SK-N-SH (cell line): ENCODE measurements at regions of chr6 and their contacts with region 1.

Region 1: GRCh38 chr6:75208298-75209183 is 2.7 kb upstream of the COL12A1 start:
- DNase-seq: peak; percentile 71
- H3K4me3 ChIP-seq: peak overlapping the region; percentile 6 to 27; a peak in 3 of 4 replicates
- H3K27ac ChIP-seq: no peak overlapping the region
- H3K4me1 ChIP-seq: peaks cover 4% of the 10 kb centered on the region in 2 experiments; a peak in 1 of 4 replicates
- H3K27me3 ChIP-seq: peaks cover 63% of the 10 kb centered on the region
- CTCF ChIP-seq: peak; percentile 96
- EP300 ChIP-seq: no peak
- RAD21 ChIP-seq: peak; percentile 93

Region 2: GRCh38 chr6:73732845-73733675 is 1475.5 kb before region 1 on chr6:
- CTCF ChIA-PET with region 1: interaction called, 85 read pairs
- POLR2A ChIA-PET with region 1: no interaction called
- DNase-seq: peak; percentile 54
- H3K4me3 ChIP-seq: peak overlapping the region in 1 of 2 experiments; percentile 13; a peak in 1 of 4 replicates
- H3K27ac ChIP-seq: no peak overlapping the region
- H3K4me1 ChIP-seq: peaks cover 0 to 1% of the 10 kb centered on the region in 2 experiments; a peak in 1 of 4 replicates
- H3K27me3 ChIP-seq: no peaks in the 10 kb centered on the region
- CTCF ChIP-seq: peak; percentile 94
- EP300 ChIP-seq: no peak
- RAD21 ChIP-seq: peak; percentile 71

Region 3: DNA sequence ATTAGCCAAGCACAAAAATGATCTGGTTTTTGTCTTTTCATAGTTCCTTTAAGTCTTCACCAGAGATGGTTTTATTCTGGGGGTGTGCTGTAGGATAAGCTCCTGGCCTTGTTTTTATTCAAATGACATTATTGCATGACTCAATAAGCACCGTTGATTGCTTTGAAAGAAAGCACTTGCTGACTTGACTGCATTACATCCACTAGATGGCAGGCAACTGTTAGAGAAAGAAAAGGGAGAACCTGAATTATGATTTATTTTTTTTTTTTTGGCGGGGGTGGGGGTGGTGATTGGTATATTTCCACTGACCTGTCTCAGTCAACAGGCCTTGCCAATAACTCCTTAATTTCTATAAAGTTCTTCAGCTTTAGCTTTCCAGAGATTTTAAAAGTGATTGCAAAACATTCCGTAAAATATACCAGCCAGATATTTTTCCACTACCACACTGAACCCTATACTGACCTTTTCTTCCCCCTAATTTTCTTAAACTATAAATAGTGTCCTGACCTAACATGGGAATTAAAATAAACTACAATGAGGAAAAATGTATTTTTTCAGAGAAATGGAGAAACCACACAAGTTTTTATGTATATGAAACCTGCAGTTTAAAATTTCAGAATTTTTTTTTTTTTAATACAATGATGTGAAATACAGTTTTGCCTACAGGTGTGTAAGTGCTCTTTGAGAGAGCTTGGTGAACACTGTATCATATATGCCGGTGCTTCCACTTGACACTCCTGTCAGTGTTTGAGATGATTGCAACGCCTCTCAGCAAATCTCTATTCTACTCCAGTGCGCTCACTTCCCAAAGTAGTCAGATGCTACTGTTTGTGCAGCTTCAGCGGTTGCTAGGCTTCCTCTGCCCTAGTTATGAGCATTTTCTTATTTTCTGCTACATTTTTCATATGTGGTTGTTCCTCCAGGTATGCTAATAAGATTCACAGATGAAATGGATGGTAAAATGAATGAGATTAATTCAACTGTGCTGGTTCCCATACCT is 1238.3 kb before region 1 on chr6:
- CTCF ChIA-PET with region 1: interaction called, 17 read pairs
- POLR2A ChIA-PET with region 1: no interaction called
- DNase-seq: peak; percentile 11
- H3K4me3 ChIP-seq: no peak overlapping the region
- H3K27ac ChIP-seq: no peak overlapping the region
- H3K4me1 ChIP-seq: no peaks in the 10 kb centered on the region
- H3K27me3 ChIP-seq: peaks cover 14% of the 10 kb centered on the region; the same call in 1 of the 2 replicates
- CTCF ChIP-seq: peak; percentile 81
- EP300 ChIP-seq: no peak
- RAD21 ChIP-seq: peak; percentile 55

Region 4: DNA sequence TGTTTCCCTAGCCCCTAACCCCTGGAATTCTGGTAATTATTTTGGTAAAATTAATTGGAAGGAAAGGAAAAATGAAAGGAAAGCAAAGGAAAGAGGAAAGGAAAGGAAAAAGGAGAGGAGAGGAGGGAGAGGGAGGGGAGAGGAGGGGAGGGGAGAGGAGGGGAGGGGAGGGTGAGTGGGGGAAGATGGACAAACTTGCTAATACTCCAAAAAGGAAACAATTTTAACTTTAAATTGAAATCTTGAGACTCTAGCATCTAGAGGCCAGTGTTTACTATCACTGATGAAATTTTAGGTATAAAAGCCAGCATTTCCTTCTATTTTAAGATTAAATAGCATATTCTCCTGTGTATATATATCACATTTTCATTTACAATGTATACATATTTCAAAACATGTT is 159.2 kb before region 1 on chr6:
- CTCF ChIA-PET with region 1: no interaction called
- POLR2A ChIA-PET with region 1: no interaction called
- DNase-seq: no peak
- H3K4me3 ChIP-seq: no peak overlapping the region
- H3K27ac ChIP-seq: no peak overlapping the region
- H3K4me1 ChIP-seq: no peaks in the 10 kb centered on the region
- H3K27me3 ChIP-seq: no peaks in the 10 kb centered on the region; the same call in 1 of the 2 replicates
- CTCF ChIP-seq: no peak
- EP300 ChIP-seq: no peak
- RAD21 ChIP-seq: no peak

Region 5: GRCh38 chr6:75196081-75196687 is 12.4 kb before region 1 on chr6:
- CTCF ChIA-PET with region 1: interaction called, 29 read pairs
- POLR2A ChIA-PET with region 1: no interaction called
- DNase-seq: no peak
- H3K4me3 ChIP-seq: no peak overlapping the region
- H3K27ac ChIP-seq: no peak overlapping the region
- H3K4me1 ChIP-seq: no peaks in the 10 kb centered on the region
- H3K27me3 ChIP-seq: peaks cover 15% of the 10 kb centered on the region
- CTCF ChIP-seq: no peak
- EP300 ChIP-seq: no peak
- RAD21 ChIP-seq: no peak

Region 6: GRCh38 chr6:75234126-75234865 is 25.8 kb after region 1 on chr6:
- CTCF ChIA-PET with region 1: interaction called, 16 read pairs
- POLR2A ChIA-PET with region 1: no interaction called
- DNase-seq: no peak
- H3K4me3 ChIP-seq: no peak overlapping the region
- H3K27ac ChIP-seq: no peak overlapping the region
- H3K4me1 ChIP-seq: no peaks in the 10 kb centered on the region
- H3K27me3 ChIP-seq: no peaks in the 10 kb centered on the region
- CTCF ChIP-seq: no peak
- EP300 ChIP-seq: no peak
- RAD21 ChIP-seq: no peak

Region 7: GRCh38 chr6:75381877-75382633 is 173.5 kb after region 1 on chr6:
- CTCF ChIA-PET with region 1: no interaction called
- POLR2A ChIA-PET with region 1: no interaction called
- DNase-seq: peak; percentile 9
- H3K4me3 ChIP-seq: no peak overlapping the region
- H3K27ac ChIP-seq: peak overlapping the region; percentile 21 to 75
- H3K4me1 ChIP-seq: peaks cover 11% of the 10 kb centered on the region in 2 experiments; a peak in 3 of 4 replicates
- H3K27me3 ChIP-seq: no peaks in the 10 kb centered on the region
- CTCF ChIP-seq: no peak
- EP300 ChIP-seq: peak in 1 of 2 experiments; percentile 40; a peak in 1 of 4 replicates
- RAD21 ChIP-seq: no peak

Region 8: GRCh38 chr6:75402296-75402695 is 193.8 kb after region 1 on chr6:
- CTCF ChIA-PET with region 1: no interaction called
- POLR2A ChIA-PET with region 1: no interaction called
- DNase-seq: no peak
- H3K4me3 ChIP-seq: no peak overlapping the region
- H3K27ac ChIP-seq: peak overlapping the region in 1 of 2 experiments; percentile 57; a peak in 2 of 4 replicates
- H3K4me1 ChIP-seq: no peaks in the 10 kb centered on the region; a peak in 1 of 4 replicates
- H3K27me3 ChIP-seq: no peaks in the 10 kb centered on the region
- CTCF ChIP-seq: no peak
- EP300 ChIP-seq: peak; percentile 20 to 95; a peak in 2 of 4 replicates
- RAD21 ChIP-seq: no peak